ENCODE measurements at regions of chr6 and their contacts with region 1.

Region 1: DNA sequence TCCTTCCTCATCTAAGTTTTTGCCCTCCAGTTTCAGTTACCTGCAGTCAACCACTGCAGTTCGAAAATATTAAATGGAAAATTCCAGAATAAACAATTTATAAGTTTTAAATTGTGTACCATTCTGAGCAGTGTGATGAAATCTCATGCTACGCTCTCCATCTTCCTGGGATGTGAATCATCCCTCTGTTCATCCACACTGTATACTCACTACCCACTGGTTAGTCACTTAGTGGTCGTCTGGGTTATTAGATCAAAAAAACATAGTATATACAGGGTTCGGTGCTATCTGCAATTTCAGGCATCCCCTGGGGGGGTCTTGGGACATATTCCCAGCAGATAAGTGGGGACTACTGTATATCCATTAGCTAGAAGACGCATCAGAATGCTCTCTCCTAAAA is 151.9 kb upstream of the SLC22A16 start:
- DNase-seq: no peak
- H3K4me3 Mint-ChIP-seq: no peak overlapping the region
- H3K27ac Mint-ChIP-seq: no peak overlapping the region
- H3K4me1 Mint-ChIP-seq: peaks cover 28% of the 10 kb centered on the region
- H3K27me3 Mint-ChIP-seq: no peaks in the 10 kb centered on the region
- CTCF ChIP-seq: no peak

Region 2: GRCh38 chr6:110671116-110671846 is 43.0 kb after region 1 on chr6:
- CTCF ChIA-PET with region 1: no interaction called
- intact Hi-C with region 1: loop called (anchors 5 kb)
- DNase-seq: no peak
- H3K4me3 Mint-ChIP-seq: no peak overlapping the region
- H3K27ac Mint-ChIP-seq: no peak overlapping the region
- H3K4me1 Mint-ChIP-seq: no peaks in the 10 kb centered on the region
- H3K27me3 Mint-ChIP-seq: no peaks in the 10 kb centered on the region
- CTCF ChIP-seq: no peak

Measured in Calu3 (cell line).